ENCODE measurements at regions of chr14 and their contacts with region 1.

Region 1: DNA sequence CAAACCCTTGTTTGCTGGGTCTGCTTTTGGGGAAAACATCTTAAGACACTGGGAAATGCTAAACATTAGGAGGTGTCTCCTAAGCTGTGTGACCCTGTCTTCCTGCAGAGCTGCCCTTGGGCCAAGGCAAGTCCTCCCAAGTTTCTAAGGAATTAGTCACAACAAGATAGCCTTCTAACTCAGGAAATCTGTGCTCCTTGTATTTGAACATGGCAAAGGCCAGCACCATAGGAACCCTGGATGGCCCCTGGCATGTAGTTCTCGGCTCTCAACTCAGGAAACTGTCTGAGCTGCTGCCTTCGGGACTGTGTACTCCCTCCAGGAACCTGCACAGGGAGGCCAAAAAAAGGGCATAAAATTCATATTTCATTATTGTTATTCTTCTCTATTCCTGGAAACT is 37.6 kb upstream of the LTBP2 start:
- DNase-seq: no peak
- ATAC-seq: no peak
- H3K4me3 ChIP-seq: no peak overlapping the region
- H3K4me3 Mint-ChIP-seq: no peak overlapping the region
- H3K27ac ChIP-seq: no peak overlapping the region
- H3K27ac Mint-ChIP-seq: peak overlapping the region in 2 of 9 donors; percentile 14
- H3K4me1 ChIP-seq: peaks cover 0 to 8% of the 10 kb centered on the region in 2 donors
- H3K4me1 Mint-ChIP-seq: peaks cover 0 to 16% (median 8%) of the 10 kb centered on the region in 7 donors
- H3K27me3 ChIP-seq: no peaks in the 10 kb centered on the region
- H3K27me3 Mint-ChIP-seq: no peaks in the 10 kb centered on the region

Region 2: DNA sequence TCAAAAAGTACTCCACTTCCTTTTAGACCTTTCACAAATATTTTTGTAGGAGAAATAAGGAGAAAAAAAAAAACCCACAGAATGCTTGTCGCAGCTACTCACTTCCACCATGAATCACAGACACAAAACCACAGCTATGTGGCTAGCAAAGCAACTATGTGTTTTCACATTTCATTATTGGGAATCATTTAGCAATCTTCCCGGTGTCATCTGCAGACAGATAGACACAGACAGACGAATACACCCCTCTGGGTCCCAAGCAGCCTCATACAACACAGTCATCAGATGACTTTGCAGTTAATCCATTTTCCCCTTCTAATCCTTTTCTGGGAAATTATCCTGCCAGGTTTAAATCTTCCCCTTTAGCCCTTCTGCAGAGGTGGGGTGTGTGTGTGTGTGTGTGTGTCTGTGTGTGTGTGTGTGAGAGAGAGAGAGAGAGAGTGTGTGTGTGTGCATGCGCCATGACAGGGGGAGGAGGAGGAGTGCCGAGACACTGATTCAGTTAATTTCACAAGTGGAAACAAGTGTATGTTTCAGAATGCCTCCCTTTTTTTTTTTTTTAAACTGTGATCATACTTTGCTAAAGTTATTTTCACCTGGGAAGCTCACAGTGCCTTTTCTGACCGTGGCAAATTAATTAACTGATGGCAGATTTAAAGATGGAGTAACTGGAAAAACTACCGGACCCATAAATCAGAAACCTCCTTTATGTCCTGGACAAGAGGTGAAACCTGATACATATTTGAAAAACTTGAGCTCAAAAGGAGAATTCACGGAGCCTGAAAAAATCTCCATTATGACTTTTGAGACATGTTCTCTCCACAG is 77.6 kb before region 1 on chr14:
- CTCF ChIA-PET with region 1: no interaction called
- POLR2A ChIA-PET with region 1: no interaction called
- intact Hi-C with region 1: no loop called
- DNase-seq: no peak
- ATAC-seq: peak; percentile 70
- H3K4me3 ChIP-seq: no peak overlapping the region
- H3K4me3 Mint-ChIP-seq: peak overlapping the region in 9 of 10 donors; percentile 14 to 63 (median 29)
- H3K27ac ChIP-seq: no peak overlapping the region
- H3K27ac Mint-ChIP-seq: peak overlapping the region in 4 of 9 donors; percentile 42 to 77 (median 55)
- H3K4me1 ChIP-seq: peaks cover 0 to 36% of the 10 kb centered on the region in 2 donors
- H3K4me1 Mint-ChIP-seq: peaks cover 14 to 33% (median 24%) of the 10 kb centered on the region in 7 donors
- H3K27me3 ChIP-seq: peaks cover 0 to 11% of the 10 kb centered on the region in 2 donors
- H3K27me3 Mint-ChIP-seq: peaks cover 0 to 36% (median 5%) of the 10 kb centered on the region in 5 donors

Region 3: DNA sequence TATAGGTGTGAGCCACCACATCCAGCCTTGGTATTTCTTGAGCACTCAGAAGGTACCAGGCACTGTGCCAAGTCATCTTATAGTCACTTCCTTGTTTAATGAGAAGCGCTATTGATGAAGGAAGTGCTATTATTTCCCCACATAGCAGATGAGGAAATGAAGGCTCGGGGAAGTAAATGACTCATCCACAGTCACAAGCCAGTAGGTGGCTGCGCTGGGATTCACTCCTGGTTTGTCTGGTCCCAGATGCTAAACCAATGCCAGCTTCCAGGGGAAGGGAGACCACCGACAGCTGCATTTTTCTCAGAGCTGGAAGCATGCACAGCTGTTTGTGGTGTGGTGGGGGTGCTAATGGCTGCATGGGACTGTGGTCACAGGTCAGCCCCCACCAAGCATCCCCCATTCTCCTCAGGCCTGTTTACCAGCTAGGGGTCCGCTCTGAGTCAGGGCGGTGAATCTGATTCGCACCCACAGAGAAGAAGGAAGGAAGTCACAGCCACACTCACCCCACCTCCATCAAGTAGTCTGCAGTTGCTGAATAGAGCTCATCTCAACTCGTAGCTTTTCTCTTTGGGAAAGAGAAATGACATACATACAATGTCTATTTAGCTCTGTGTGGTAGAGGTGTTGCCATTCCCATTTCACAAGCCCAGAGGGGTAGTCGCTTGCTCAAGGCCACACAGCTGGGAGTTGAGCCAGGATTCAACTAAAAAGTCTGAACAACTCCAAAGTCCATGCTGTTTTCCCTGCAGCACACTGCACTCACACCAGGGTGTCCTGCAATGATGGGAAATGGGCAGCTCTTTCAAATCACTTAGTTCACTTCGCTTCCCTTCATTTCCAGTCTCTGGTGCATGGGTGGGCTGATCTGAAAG is 31.4 kb before region 1 on chr14:
- CTCF ChIA-PET with region 1: interaction called, 4 read pairs
- POLR2A ChIA-PET with region 1: interaction called, 3 read pairs
- intact Hi-C with region 1: loop called in 1 of 2 experiments (anchors 5 kb)
- DNase-seq: peak; percentile 31 to 70 (median 58)
- ATAC-seq: peak; percentile 86
- H3K4me3 ChIP-seq: peak overlapping the region; percentile 52
- H3K4me3 Mint-ChIP-seq: peak overlapping the region; percentile 55 to 92 (median 82)
- H3K27ac ChIP-seq: peak overlapping the region; percentile 67
- H3K27ac Mint-ChIP-seq: peak overlapping the region; percentile 70 to 95 (median 93)
- H3K4me1 ChIP-seq: peaks cover 24 to 45% of the 10 kb centered on the region in 2 donors
- H3K4me1 Mint-ChIP-seq: peaks cover 40 to 70% (median 47%) of the 10 kb centered on the region in 7 donors
- H3K27me3 ChIP-seq: no peaks in the 10 kb centered on the region
- H3K27me3 Mint-ChIP-seq: peaks cover 0 to 29% (median 2%) of the 10 kb centered on the region in 5 donors